Mammary epithelial cell (primary cell): ENCODE measurements at regions of chr4 and their contacts with region 1.

Region 1: GRCh38 chr4:20313237-20314030 is 61.7 kb downstream of the SLIT2 start:
- DNase-seq: no peak
- H3K4me3 ChIP-seq: no peak overlapping the region
- H3K27ac ChIP-seq: no peak overlapping the region
- H3K4me1 ChIP-seq: no peaks in the 10 kb centered on the region
- H3K27me3 ChIP-seq: no peaks in the 10 kb centered on the region
- CTCF ChIP-seq: peak in 1 of 2 donors; percentile 8

Region 2: GRCh38 chr4:20251796-20252655 is 61.4 kb before region 1 on chr4 and contains the start of gene SLIT2:
- CTCF ChIA-PET with region 1: no interaction called
- dilution Hi-C with region 1: no loop called
- in situ Hi-C with region 1: no loop called
- intact Hi-C with region 1: no loop called
- DNase-seq: peak; percentile 55
- H3K4me3 ChIP-seq: peak within 1 kb of the TSS; percentile 62 to 68 (median 65)
- H3K27ac ChIP-seq: no peak within 1 kb of the TSS
- H3K4me1 ChIP-seq: peaks cover 38% of the 10 kb centered on the region
- H3K27me3 ChIP-seq: no peaks in the 10 kb centered on the region
- CTCF ChIP-seq: no peak
- total RNA-seq, gene SLIT2: 0.17 to 4.2 TPM

Region 3: GRCh38 chr4:20544645-20545044 is 231.2 kb after region 1 on chr4:
- CTCF ChIA-PET with region 1: no interaction called
- dilution Hi-C with region 1: no loop called
- in situ Hi-C with region 1: loop called in 1 of 2 experiments (anchors 25 kb)
- intact Hi-C with region 1: no loop called
- DNase-seq: peak; percentile 13
- H3K4me3 ChIP-seq: no peak overlapping the region
- H3K27ac ChIP-seq: no peak overlapping the region
- H3K4me1 ChIP-seq: no peaks in the 10 kb centered on the region
- H3K27me3 ChIP-seq: no peaks in the 10 kb centered on the region
- CTCF ChIP-seq: peak; percentile 47 to 70